ENCODE measurements at regions of chr2 and their contacts with region 1.

Region 1: DNA sequence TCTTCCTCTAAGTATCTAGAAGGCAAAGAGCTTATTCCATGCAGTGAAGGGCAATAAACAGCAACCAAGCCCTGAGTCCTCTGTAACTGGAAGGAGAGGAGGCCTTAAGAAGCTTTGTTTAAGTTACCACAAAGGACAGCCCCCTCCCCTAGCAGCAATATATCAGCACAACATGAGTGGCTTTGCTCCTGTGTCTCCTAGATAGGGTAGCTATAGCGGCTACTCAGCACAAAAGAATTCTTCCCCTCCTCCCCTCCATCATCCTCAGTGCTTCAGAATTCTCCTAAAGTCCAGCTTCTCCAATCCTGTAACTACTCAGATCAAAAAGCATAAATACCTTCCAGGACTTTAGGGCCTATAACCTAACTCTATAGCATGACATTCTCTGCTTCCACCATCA is 16.5 kb downstream of the SUMO1 start:
- DNase-seq: no peak
- ATAC-seq: no peak
- H3K4me3 ChIP-seq: no peak overlapping the region
- H3K27ac ChIP-seq: no peak overlapping the region
- H3K4me1 ChIP-seq: no peaks in the 10 kb centered on the region; the same call in 1 of the 2 replicates
- H3K27me3 ChIP-seq: no peaks in the 10 kb centered on the region
- CTCF ChIP-seq: no peak
- EP300 ChIP-seq: no peak
- POLR2A ChIP-seq: no peak
- RAD21 ChIP-seq: no peak

Region 2: DNA sequence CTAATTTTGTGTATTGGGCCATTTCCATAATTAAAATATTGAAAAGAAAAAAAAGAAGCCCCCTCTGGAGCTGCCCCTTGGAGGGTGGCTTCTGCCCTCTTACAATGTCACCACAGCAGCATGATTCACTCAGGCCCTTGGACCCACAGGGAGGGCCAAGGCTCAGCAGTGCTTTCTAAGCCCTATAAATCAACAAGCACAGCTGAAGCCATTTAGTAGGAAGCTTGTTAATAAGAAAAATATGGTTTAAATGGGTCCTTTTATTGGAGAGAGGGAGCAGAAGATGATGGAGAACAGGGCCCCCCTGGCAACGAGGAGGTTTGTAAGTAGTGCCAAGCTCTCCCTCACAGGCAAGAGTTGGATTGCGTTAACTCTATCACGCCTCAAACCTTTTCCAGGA is 295.8 kb before region 1 on chr2:
- CTCF ChIA-PET with region 1: no interaction called
- POLR2A ChIA-PET with region 1: no interaction called
- RAD21 ChIA-PET with region 1: no interaction called
- SMC1A ChIA-PET with region 1: no interaction called
- in situ Hi-C with region 1: no loop called
- intact Hi-C with region 1: no loop called
- DNase-seq: no peak
- ATAC-seq: no peak
- H3K4me3 ChIP-seq: no peak overlapping the region
- H3K27ac ChIP-seq: no peak overlapping the region
- H3K4me1 ChIP-seq: no peaks in the 10 kb centered on the region
- H3K27me3 ChIP-seq: no peaks in the 10 kb centered on the region; a peak in 1 of 4 replicates
- CTCF ChIP-seq: no peak
- EP300 ChIP-seq: no peak
- POLR2A ChIP-seq: no peak
- RAD21 ChIP-seq: no peak

Region 3: DNA sequence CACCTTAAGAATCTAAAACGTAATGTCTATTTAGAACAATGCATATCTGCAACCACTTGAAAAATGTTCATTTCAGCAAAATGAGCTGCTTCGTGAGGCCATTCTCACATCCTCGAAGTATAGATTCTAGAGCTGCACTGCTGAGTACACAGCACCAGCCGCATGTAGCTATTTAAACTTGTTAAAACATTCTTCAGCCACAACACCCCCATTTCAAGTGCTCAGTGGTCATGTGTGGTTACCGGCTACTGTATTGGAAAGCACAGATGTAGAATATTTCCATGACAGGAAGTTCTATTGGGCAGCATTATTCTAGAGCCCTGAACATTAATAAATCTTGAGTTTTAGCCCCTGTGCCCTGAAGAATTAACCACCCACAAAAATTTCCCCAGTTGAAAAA is 18.5 kb before region 1 on chr2:
- CTCF ChIA-PET with region 1: no interaction called
- POLR2A ChIA-PET with region 1: no interaction called
- RAD21 ChIA-PET with region 1: no interaction called
- SMC1A ChIA-PET with region 1: no interaction called
- in situ Hi-C with region 1: no loop called
- intact Hi-C with region 1: no loop called
- DNase-seq: no peak
- ATAC-seq: no peak
- H3K4me3 ChIP-seq: no peak overlapping the region
- H3K27ac ChIP-seq: no peak overlapping the region
- H3K4me1 ChIP-seq: no peaks in the 10 kb centered on the region
- H3K27me3 ChIP-seq: no peaks in the 10 kb centered on the region
- CTCF ChIP-seq: no peak
- EP300 ChIP-seq: no peak
- POLR2A ChIP-seq: no peak
- RAD21 ChIP-seq: no peak

Region 4: DNA sequence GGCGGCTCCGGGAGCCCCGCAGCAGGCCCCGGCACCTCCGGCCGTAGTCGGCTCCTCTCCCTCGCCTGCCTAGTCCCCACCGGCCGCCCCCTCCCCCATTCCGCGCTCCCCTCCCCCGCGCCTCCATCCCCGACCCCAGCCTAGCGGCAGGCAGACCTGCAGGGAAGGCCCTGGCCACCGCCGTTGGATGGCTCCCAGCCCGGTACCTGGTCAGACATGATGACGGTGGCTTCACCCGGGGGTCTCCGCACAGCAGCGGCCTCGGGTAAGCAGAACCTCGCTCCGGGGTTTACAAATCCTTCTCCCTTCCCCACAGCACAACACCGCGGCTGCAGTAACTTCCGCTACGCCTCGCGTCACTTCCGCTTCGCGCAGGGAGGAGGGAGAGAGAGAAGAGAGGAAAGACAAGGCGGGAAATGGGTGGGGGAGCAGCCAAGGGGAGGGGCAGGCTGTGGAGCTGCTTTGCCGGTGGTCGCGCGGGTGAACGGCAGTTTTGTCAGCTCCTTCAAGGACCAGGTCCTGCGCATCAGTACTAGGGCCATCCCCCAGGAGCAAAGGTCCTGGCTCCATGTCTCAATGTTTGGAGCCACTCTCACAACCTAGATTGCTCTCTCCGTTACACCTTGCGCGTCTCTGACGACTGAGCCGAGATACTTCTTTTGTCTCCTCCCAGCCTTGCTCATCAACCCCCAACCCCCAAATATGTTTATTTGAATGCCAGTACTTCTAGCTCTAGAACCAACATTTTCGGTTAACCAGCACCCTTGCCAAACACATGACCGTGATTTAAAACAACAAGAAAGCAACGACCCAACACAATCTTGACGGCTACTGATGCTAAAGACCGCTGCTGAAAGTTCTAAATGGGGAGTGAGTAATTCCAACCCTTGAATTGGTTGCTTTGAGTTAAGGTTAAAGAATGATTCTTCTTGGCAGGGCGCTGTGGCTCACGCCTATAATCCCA is 16.6 kb after region 1 on chr2 and contains the start of gene SUMO1:
- CTCF ChIA-PET with region 1: interaction called, 3 read pairs
- POLR2A ChIA-PET with region 1: interaction called, 4 read pairs
- RAD21 ChIA-PET with region 1: interaction called, 4 read pairs
- SMC1A ChIA-PET with region 1: interaction called, 3 read pairs
- in situ Hi-C with region 1: no loop called
- intact Hi-C with region 1: loop called (anchors 1 kb)
- DNase-seq: peak; percentile 72
- ATAC-seq: peak; percentile 95
- H3K4me3 ChIP-seq: peak within 1 kb of the TSS; percentile 91
- H3K27ac ChIP-seq: peak within 1 kb of the TSS; percentile 72
- H3K4me1 ChIP-seq: no peaks in the 10 kb centered on the region
- H3K27me3 ChIP-seq: no peaks in the 10 kb centered on the region
- CTCF ChIP-seq: no peak
- EP300 ChIP-seq: no peak
- POLR2A ChIP-seq: peak; percentile 93
- RAD21 ChIP-seq: no peak
- polyA plus RNA-seq, gene SUMO1: 351 to 458 TPM

Measured in GM12878 (cell line).